GM12878 (cell line): ENCODE measurements at regions of chr2 and their contacts with region 1.

Region 1: GRCh38 chr2:170873035-170873692 is 55.9 kb upstream of the GORASP2 start:
- DNase-seq: peak; percentile 24
- ATAC-seq: peak; percentile 99
- H3K4me3 ChIP-seq: peak overlapping the region; percentile 49; the same call in 1 of the 2 replicates
- H3K27ac ChIP-seq: no peak overlapping the region
- H3K4me1 ChIP-seq: no peaks in the 10 kb centered on the region
- H3K27me3 ChIP-seq: no peaks in the 10 kb centered on the region
- CTCF ChIP-seq: peak; percentile 85 to 98 (median 94)
- EP300 ChIP-seq: no peak
- POLR2A ChIP-seq: no peak
- RAD21 ChIP-seq: peak; percentile 66

Region 2: DNA sequence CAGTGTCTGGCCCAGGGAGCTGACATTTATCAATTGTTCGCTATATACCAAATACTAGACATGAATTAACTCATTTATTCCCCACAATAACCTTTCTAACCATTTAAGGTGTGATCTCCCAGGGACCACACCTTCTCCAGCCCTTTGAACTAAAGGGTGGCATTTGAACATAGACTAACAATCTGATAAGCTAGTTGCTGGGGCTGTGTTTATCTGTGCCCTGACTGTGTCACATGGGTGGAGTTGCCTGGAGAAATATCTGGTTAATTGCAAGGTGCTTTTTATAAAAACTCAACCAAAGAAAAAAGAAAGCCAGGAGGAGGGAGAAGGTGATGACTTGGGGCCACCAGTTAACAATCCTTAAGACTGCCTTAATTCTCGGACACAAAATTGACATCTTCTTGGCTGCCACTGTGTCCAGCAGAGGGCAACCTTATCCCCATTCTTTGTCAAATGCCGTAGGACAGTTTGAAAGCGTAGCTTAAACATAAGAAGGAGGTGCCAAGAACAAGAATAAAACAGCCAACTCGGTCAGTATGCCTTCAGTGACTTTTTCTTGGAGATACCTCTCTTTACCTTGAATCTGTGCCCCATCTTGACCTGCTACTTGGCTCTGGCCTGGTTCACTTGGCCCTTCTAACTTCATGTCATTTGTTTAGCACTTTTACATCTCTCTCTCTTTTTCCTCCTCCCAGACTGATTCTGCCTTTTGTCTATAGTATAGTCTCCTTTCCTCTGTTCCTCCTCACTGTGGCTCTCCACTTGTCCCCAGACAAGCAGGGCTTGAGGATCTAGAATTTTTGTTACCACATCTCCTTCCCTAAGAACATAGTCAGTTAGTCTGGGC is 511.9 kb before region 1 on chr2:
- CTCF ChIA-PET with region 1: interaction called, 6 read pairs
- POLR2A ChIA-PET with region 1: no interaction called
- RAD21 ChIA-PET with region 1: no interaction called
- SMC1A ChIA-PET with region 1: interaction called, 3 read pairs
- in situ Hi-C with region 1: no loop called
- intact Hi-C with region 1: loop called (anchors 5 kb)
- DNase-seq: peak; percentile 26
- ATAC-seq: peak; percentile 97
- H3K4me3 ChIP-seq: no peak overlapping the region
- H3K27ac ChIP-seq: no peak overlapping the region
- H3K4me1 ChIP-seq: no peaks in the 10 kb centered on the region
- H3K27me3 ChIP-seq: no peaks in the 10 kb centered on the region
- CTCF ChIP-seq: peak; percentile 76 to 87 (median 80)
- EP300 ChIP-seq: no peak
- POLR2A ChIP-seq: no peak
- RAD21 ChIP-seq: peak; percentile 65

Region 3: DNA sequence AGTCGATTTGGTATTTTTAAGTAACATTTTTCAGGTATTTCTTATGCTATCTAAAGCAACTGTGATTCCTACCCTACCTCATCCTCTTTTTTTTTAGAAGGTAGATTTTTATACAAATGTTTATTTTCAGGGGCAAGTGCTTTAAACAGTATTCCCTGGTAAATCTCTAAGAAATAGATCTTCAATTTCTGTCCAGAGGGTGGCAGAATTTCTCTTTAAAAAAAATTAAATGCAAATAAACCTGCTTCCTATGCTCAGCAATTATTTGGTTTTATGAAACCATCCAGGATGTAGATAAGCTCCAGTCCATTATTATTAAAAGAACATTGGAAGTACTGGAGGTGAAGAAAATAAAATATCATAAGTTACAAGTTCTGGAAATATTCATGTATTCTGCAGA is 503.3 kb before region 1 on chr2:
- CTCF ChIA-PET with region 1: interaction called, 18 read pairs
- POLR2A ChIA-PET with region 1: no interaction called
- RAD21 ChIA-PET with region 1: interaction called, 5 read pairs
- SMC1A ChIA-PET with region 1: interaction called, 3 read pairs
- in situ Hi-C with region 1: no loop called
- intact Hi-C with region 1: no loop called
- DNase-seq: no peak
- ATAC-seq: 0 out of 3 replicates have a peak, but pooled peaks have one; percentile 36
- H3K4me3 ChIP-seq: no peak overlapping the region
- H3K27ac ChIP-seq: no peak overlapping the region
- H3K4me1 ChIP-seq: no peaks in the 10 kb centered on the region; the same call in 1 of the 2 replicates
- H3K27me3 ChIP-seq: no peaks in the 10 kb centered on the region; a peak in 1 of 4 replicates
- CTCF ChIP-seq: peak in 1 of 3 experiments; percentile 36; a peak in 1 of 6 replicates
- EP300 ChIP-seq: no peak
- POLR2A ChIP-seq: no peak
- RAD21 ChIP-seq: peak; percentile 24; the same call in 1 of the 2 replicates

Region 4: DNA sequence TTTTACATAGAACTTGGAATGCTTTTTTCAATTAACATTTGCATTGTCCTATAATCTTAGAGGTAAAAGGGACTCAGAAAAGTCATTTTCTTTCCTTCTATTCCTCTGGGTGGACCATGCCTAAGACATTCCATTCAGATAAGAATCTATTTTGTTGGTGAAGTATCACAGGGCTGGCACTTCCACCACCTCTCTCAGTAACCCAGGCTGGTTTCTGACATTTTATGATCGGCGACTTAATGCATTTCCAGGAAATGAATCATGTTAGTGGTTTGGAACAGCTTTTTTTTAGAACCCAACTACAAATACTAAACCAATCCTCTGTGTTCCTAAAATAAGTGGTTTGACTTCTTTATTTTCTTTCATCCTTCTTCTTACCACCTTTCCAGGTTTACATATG is 29.5 kb before region 1 on chr2:
- CTCF ChIA-PET with region 1: interaction called, 41 read pairs
- POLR2A ChIA-PET with region 1: no interaction called
- RAD21 ChIA-PET with region 1: interaction called, 11 read pairs
- SMC1A ChIA-PET with region 1: interaction called, 7 read pairs
- in situ Hi-C with region 1: no loop called
- intact Hi-C with region 1: no loop called
- DNase-seq: no peak
- ATAC-seq: no peak
- H3K4me3 ChIP-seq: no peak overlapping the region
- H3K27ac ChIP-seq: no peak overlapping the region
- H3K4me1 ChIP-seq: no peaks in the 10 kb centered on the region
- H3K27me3 ChIP-seq: no peaks in the 10 kb centered on the region
- CTCF ChIP-seq: no peak
- EP300 ChIP-seq: no peak
- POLR2A ChIP-seq: no peak
- RAD21 ChIP-seq: no peak

Region 5: GRCh38 chr2:170851635-170852034 is 21.5 kb before region 1 on chr2:
- CTCF ChIA-PET with region 1: interaction called, 41 read pairs
- POLR2A ChIA-PET with region 1: no interaction called
- RAD21 ChIA-PET with region 1: interaction called, 11 read pairs
- SMC1A ChIA-PET with region 1: interaction called, 4 read pairs
- in situ Hi-C with region 1: no loop called
- intact Hi-C with region 1: no loop called
- DNase-seq: no peak
- ATAC-seq: no peak
- H3K4me3 ChIP-seq: no peak overlapping the region
- H3K27ac ChIP-seq: no peak overlapping the region
- H3K4me1 ChIP-seq: no peaks in the 10 kb centered on the region
- H3K27me3 ChIP-seq: no peaks in the 10 kb centered on the region
- CTCF ChIP-seq: no peak
- EP300 ChIP-seq: no peak
- POLR2A ChIP-seq: no peak
- RAD21 ChIP-seq: no peak

Region 6: GRCh38 chr2:170862286-170862902 is 10.8 kb before region 1 on chr2:
- CTCF ChIA-PET with region 1: interaction called, 21 read pairs
- POLR2A ChIA-PET with region 1: no interaction called
- RAD21 ChIA-PET with region 1: no interaction called
- SMC1A ChIA-PET with region 1: interaction called, 4 read pairs
- in situ Hi-C with region 1: no loop called
- intact Hi-C with region 1: no loop called
- DNase-seq: no peak
- ATAC-seq: no peak
- H3K4me3 ChIP-seq: no peak overlapping the region
- H3K27ac ChIP-seq: no peak overlapping the region
- H3K4me1 ChIP-seq: no peaks in the 10 kb centered on the region
- H3K27me3 ChIP-seq: no peaks in the 10 kb centered on the region
- CTCF ChIP-seq: no peak
- EP300 ChIP-seq: no peak
- POLR2A ChIP-seq: no peak
- RAD21 ChIP-seq: no peak

Region 7: GRCh38 chr2:170886386-170886785 is 13.2 kb after region 1 on chr2:
- CTCF ChIA-PET with region 1: interaction called, 30 read pairs
- POLR2A ChIA-PET with region 1: interaction called, 3 read pairs
- RAD21 ChIA-PET with region 1: interaction called, 3 read pairs
- SMC1A ChIA-PET with region 1: interaction called, 6 read pairs
- in situ Hi-C with region 1: no loop called
- intact Hi-C with region 1: no loop called
- DNase-seq: no peak
- ATAC-seq: peak; percentile 64
- H3K4me3 ChIP-seq: no peak overlapping the region
- H3K27ac ChIP-seq: no peak overlapping the region
- H3K4me1 ChIP-seq: no peaks in the 10 kb centered on the region
- H3K27me3 ChIP-seq: no peaks in the 10 kb centered on the region
- CTCF ChIP-seq: no peak
- EP300 ChIP-seq: no peak
- POLR2A ChIP-seq: no peak
- RAD21 ChIP-seq: no peak

Region 8: GRCh38 chr2:171102802-171103201 is 229.6 kb after region 1 on chr2:
- CTCF ChIA-PET with region 1: no interaction called
- POLR2A ChIA-PET with region 1: no interaction called
- RAD21 ChIA-PET with region 1: no interaction called
- SMC1A ChIA-PET with region 1: no interaction called
- in situ Hi-C with region 1: no loop called
- intact Hi-C with region 1: no loop called
- DNase-seq: no peak
- ATAC-seq: no peak
- H3K4me3 ChIP-seq: no peak overlapping the region
- H3K27ac ChIP-seq: no peak overlapping the region
- H3K4me1 ChIP-seq: no peaks in the 10 kb centered on the region
- H3K27me3 ChIP-seq: no peaks in the 10 kb centered on the region
- CTCF ChIP-seq: no peak
- EP300 ChIP-seq: no peak
- POLR2A ChIP-seq: no peak
- RAD21 ChIP-seq: no peak